Lower lobe of right lung (tissue), 2 donors: ENCODE measurements at regions of chr5 and their contacts with region 1.

Region 1: GRCh38 chr5:95858661-95859326 is 36.3 kb upstream of the GLRX start:
- DNase-seq: peak; percentile 92
- ATAC-seq: peak; percentile 82 to 91
- H3K4me3 ChIP-seq: peak overlapping the region; percentile 35
- H3K27ac ChIP-seq: peak overlapping the region; percentile 80
- H3K4me1 ChIP-seq: peaks cover 72% of the 10 kb centered on the region
- H3K27me3 ChIP-seq: no peaks in the 10 kb centered on the region
- CTCF ChIP-seq: peak; percentile 98

Region 2: DNA sequence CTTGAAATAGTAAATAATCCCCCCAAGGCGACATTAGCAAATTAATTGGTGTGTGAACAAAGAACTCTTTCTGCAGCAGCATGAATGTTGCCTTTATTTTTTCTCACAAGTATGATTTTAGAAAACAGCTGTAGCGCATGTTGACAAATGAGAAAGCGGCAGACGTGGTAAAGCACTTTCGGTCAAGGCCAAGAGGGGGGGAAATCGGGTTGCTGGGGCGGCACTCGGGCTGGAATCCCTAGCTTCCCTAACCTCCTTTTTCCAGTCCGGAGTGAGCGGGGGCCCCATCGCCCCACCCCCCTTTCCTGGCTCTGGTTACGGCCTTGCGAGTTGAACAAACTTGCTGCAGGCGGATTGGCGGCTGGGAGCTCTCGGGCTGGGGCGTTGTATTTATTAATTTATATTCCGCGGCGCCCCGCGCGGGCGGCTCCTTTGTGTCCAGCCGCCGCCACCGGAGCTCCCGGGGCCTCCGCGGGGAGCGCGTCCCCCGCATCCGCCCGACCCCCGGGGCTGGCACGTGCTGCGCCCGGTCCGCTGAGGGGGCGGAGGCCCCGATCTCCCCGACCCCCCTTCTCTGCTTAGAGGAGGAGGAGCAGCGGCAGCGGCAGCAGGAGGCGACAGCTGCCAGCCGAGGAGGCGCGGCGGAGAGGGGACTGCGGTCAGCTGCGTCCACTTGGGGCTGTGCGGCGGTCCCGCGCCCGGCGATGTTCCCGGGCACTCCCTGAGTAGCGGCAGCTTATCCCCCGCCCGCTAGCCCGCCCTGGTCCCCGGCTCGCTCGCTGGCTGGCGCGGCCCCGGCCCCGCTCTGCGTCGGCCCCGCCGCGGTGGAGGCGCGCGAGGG is 127.8 kb before region 1 on chr5 and contains the start of gene RHOBTB3:
- intact Hi-C with region 1: no loop called
- DNase-seq: peak; percentile 88
- ATAC-seq: peak; percentile 88 to 89
- H3K4me3 ChIP-seq: peak within 1 kb of the TSS; percentile 74
- H3K27ac ChIP-seq: peak within 1 kb of the TSS; percentile 88
- H3K4me1 ChIP-seq: peaks cover 49% of the 10 kb centered on the region
- H3K27me3 ChIP-seq: no peaks in the 10 kb centered on the region
- CTCF ChIP-seq: no peak
- total RNA-seq, gene RHOBTB3: 51.7 TPM

Region 3: GRCh38 chr5:96336351-96336985 is 477.7 kb after region 1 on chr5:
- intact Hi-C with region 1: loop called (anchors 5 kb)
- DNase-seq: no peak
- ATAC-seq: peak; percentile 91 to 94
- H3K4me3 ChIP-seq: no peak overlapping the region
- H3K27ac ChIP-seq: no peak overlapping the region
- H3K4me1 ChIP-seq: peaks cover 33% of the 10 kb centered on the region
- H3K27me3 ChIP-seq: no peaks in the 10 kb centered on the region
- CTCF ChIP-seq: peak; percentile 85